ENCODE measurements at regions of chr16 and their contacts with region 1.

Region 1: DNA sequence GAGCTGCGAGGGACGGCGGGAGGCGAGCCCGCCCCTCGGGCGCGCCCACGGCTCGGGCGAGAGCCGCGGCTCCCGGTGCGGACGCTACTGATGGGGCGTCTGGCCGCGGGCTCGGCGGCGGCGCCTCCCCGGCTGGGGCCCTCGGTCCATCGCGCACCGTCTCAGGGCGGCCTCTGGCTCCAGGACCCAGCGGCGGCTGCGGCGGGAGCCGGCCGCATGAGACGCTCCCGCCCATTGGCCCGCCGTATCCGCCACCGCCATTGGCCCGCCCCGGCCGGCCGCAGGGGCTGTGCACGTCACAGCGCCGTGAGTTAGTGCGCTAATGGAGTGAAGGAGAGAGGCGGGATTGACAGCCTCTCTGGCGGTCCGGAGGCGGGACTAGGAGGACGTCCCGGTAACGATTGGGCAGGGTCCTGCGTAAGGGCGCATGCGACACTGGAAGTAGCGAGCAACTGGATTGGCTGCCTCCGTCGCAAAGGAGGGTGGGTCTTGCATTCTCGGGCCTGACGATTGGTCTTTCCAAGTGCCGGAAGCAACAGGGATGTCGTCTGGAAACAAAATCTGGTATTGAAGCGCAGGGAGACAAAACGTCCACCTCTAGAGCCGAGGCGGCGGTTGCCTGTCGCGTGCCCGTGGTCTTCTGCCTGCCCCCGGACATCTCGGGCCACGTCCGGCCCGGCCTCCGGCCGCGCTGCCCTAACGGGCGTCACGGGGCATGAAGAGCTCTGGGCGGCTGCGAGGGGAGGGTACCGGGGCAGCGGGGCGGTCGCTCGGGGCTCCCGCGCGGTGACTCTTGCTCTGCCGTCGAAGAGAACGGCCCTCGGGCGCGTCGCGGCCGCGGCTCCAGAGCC is at the start of gene ANKRD11:
- DNase-seq: peak; percentile 100
- H3K4me3 ChIP-seq: peak within 1 kb of the TSS; percentile 59 to 86 (median 84)
- H3K4me3 Mint-ChIP-seq: peak within 1 kb of the TSS; percentile 82 to 90
- H3K27ac ChIP-seq: peak within 1 kb of the TSS; percentile 85 to 99
- H3K27ac Mint-ChIP-seq: peak within 1 kb of the TSS; percentile 96 to 99 (median 97)
- H3K4me1 ChIP-seq: peaks cover 51 to 61% of the 10 kb centered on the region in 2 donors
- H3K4me1 Mint-ChIP-seq: peaks cover 63% of the 10 kb centered on the region
- H3K27me3 ChIP-seq: no peaks in the 10 kb centered on the region
- H3K27me3 Mint-ChIP-seq: peaks cover 0 to 5% (median 1%) of the 10 kb centered on the region in 3 donors
- CTCF ChIP-seq: no peak
- polyA plus RNA-seq, gene ANKRD11: 3.2 to 62.4 (median 5.4) TPM

Region 2: GRCh38 chr16:89357055-89357816 is 133.4 kb before region 1 on chr16:
- intact Hi-C with region 1: loop called in 1 of 2 experiments (anchors 5 kb)
- DNase-seq: peak; percentile 55 to 69 (median 63)
- H3K4me3 ChIP-seq: peak overlapping the region in 1 of 3 experiments; percentile 38
- H3K4me3 Mint-ChIP-seq: peak overlapping the region; percentile 69 to 84
- H3K27ac ChIP-seq: peak overlapping the region; percentile 67 to 79
- H3K27ac Mint-ChIP-seq: peak overlapping the region; percentile 90 to 97 (median 93)
- H3K4me1 ChIP-seq: peaks cover 69 to 82% of the 10 kb centered on the region in 2 donors
- H3K4me1 Mint-ChIP-seq: peaks cover 83% of the 10 kb centered on the region
- H3K27me3 ChIP-seq: no peaks in the 10 kb centered on the region
- H3K27me3 Mint-ChIP-seq: peaks cover 0 to 6% (median 0%) of the 10 kb centered on the region in 3 donors
- CTCF ChIP-seq: peak; percentile 11

Region 3: DNA sequence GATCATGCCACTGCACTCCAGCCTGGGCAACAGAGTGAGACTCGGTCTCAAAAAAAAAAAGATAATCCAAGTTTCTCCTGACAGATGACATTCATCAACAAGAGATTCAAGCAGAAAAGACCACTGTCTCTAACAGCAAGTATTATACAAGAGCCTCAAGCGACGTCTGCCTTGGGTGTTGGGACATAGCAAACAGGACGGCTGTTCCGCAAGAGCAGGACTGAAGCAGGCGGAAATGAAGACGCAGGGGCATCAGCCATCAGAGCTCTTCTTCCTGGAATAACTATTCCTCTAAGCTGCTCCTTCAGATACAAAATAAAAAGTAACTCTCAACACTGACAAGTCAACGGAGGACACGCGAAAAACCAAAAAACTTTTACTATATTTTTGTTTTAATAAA is 54.2 kb before region 1 on chr16:
- intact Hi-C with region 1: loop called (anchors 2 to 5 kb)
- DNase-seq: peak; percentile 68 to 74 (median 74)
- H3K4me3 ChIP-seq: peak overlapping the region in 1 of 3 experiments; percentile 67
- H3K4me3 Mint-ChIP-seq: peak overlapping the region in 1 of 2 donors; percentile 81
- H3K27ac ChIP-seq: peak overlapping the region; percentile 83 to 86
- H3K27ac Mint-ChIP-seq: peak overlapping the region; percentile 95 to 98 (median 97)
- H3K4me1 ChIP-seq: peaks cover 47 to 59% of the 10 kb centered on the region in 2 donors
- H3K4me1 Mint-ChIP-seq: peaks cover 69% of the 10 kb centered on the region
- H3K27me3 ChIP-seq: no peaks in the 10 kb centered on the region
- H3K27me3 Mint-ChIP-seq: peaks cover 0 to 8% (median 0%) of the 10 kb centered on the region in 3 donors
- CTCF ChIP-seq: no peak

Region 4: GRCh38 chr16:89442990-89443731 is 47.5 kb before region 1 on chr16:
- intact Hi-C with region 1: loop called in 1 of 2 experiments (anchors 5 kb)
- DNase-seq: no peak
- H3K4me3 ChIP-seq: no peak overlapping the region
- H3K4me3 Mint-ChIP-seq: no peak overlapping the region
- H3K27ac ChIP-seq: peak overlapping the region in 1 of 2 donors; percentile 35
- H3K27ac Mint-ChIP-seq: peak overlapping the region in 6 of 7 donors; percentile 21 to 79 (median 71)
- H3K4me1 ChIP-seq: peaks cover 56 to 77% of the 10 kb centered on the region in 2 donors
- H3K4me1 Mint-ChIP-seq: peaks cover 88% of the 10 kb centered on the region
- H3K27me3 ChIP-seq: no peaks in the 10 kb centered on the region
- H3K27me3 Mint-ChIP-seq: peaks cover 0 to 2% (median 0%) of the 10 kb centered on the region in 3 donors
- CTCF ChIP-seq: no peak

Region 5: GRCh38 chr16:89473791-89474414 is 16.7 kb before region 1 on chr16:
- intact Hi-C with region 1: loop called in 1 of 2 experiments (anchors 2 kb)
- DNase-seq: peak; percentile 74 to 78 (median 75)
- H3K4me3 ChIP-seq: peak overlapping the region in 1 of 3 experiments; percentile 7
- H3K4me3 Mint-ChIP-seq: peak overlapping the region in 1 of 2 donors; percentile 69
- H3K27ac ChIP-seq: peak overlapping the region; percentile 5 to 85
- H3K27ac Mint-ChIP-seq: peak overlapping the region; percentile 90 to 98 (median 95)
- H3K4me1 ChIP-seq: peaks cover 62 to 87% of the 10 kb centered on the region in 2 donors
- H3K4me1 Mint-ChIP-seq: peaks cover 85% of the 10 kb centered on the region
- H3K27me3 ChIP-seq: no peaks in the 10 kb centered on the region
- H3K27me3 Mint-ChIP-seq: peaks cover 0 to 2% (median 0%) of the 10 kb centered on the region in 3 donors
- CTCF ChIP-seq: no peak

Region 6: GRCh38 chr16:89507834-89508590 is 17.4 kb after region 1 on chr16 and contains the start of gene SPG7:
- intact Hi-C with region 1: loop called (anchors 1 to 2 kb)
- DNase-seq: peak; percentile 78 to 85 (median 84)
- H3K4me3 ChIP-seq: peak within 1 kb of the TSS; percentile 61 to 88 (median 86)
- H3K4me3 Mint-ChIP-seq: peak within 1 kb of the TSS; percentile 80 to 85
- H3K27ac ChIP-seq: peak within 1 kb of the TSS; percentile 66 to 90
- H3K27ac Mint-ChIP-seq: peak within 1 kb of the TSS; percentile 63 to 91 (median 89)
- H3K4me1 ChIP-seq: peaks cover 38 to 49% of the 10 kb centered on the region in 2 donors
- H3K4me1 Mint-ChIP-seq: peaks cover 38% of the 10 kb centered on the region
- H3K27me3 ChIP-seq: no peaks in the 10 kb centered on the region
- H3K27me3 Mint-ChIP-seq: no peaks in the 10 kb centered on the region
- CTCF ChIP-seq: no peak
- polyA plus RNA-seq, gene SPG7: 30.3 to 120 (median 34.4) TPM

Measured in CD14-positive monocyte (primary cell).